ENCODE measurements at regions of chr13 and their contacts with region 1.

Region 1: GRCh38 chr13:110396913-110397381 is 89.9 kb downstream of the COL4A2 start:
- DNase-seq: peak; percentile 92
- ATAC-seq: peak; percentile 94

Region 2: GRCh38 chr13:110361365-110361911 is 35.5 kb before region 1 on chr13:
- intact Hi-C with region 1: loop called (anchors 5 kb)
- DNase-seq: no peak
- ATAC-seq: peak; percentile 92

Measured in Right ventricle myocardium inferior (tissue), 1 donor.